ENCODE measurements at regions of chr2 and their contacts with region 1.

Region 1: DNA sequence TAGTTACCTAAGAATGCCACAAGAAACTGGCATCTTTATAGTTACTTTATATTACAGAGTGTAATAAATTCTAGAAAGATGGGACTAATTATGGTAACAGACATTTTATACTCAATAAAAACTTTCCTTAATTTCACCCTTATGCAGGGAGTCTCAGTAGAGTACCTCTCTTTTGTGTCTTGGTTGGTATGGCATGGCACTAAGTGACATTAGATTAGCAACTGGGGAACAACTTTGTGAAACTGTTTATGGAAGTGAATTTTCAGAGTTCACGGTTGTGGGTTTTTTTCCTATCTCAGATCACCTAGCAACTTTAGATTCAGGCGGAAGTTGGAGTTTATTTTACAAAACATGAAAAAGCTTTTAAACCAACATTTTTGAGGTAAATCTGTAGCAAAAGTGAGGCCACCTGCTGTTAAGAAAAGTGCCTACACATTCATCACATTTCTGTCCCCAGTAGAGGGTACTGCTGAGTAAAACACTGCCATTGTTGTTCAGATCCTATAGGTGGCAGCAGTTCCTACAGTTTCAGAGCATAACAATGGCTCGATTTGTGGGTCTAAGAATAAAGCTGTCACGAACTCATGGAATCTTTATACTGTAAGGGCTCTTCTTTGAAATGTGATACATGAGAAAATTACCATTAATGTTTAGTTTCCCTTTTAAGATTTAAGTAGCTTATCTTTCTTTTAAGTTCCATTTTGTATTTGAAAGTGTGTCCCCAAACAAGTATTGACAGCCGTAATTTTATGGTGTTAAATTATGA is 117.6 kb downstream of the CAMKMT start:
- DNase-seq: peak; percentile 74 to 91
- ATAC-seq: peak; percentile 99 to 100
- H3K4me3 ChIP-seq: no peak overlapping the region
- H3K27ac ChIP-seq: no peak overlapping the region
- H3K4me1 ChIP-seq: no peaks in the 10 kb centered on the region
- CTCF ChIP-seq: peak; percentile 100
- EP300 ChIP-seq: no peak
- POLR2A ChIP-seq: no peak
- RAD21 ChIP-seq: peak; percentile 98

Region 2: GRCh38 chr2:44397447-44398175 is 81.7 kb before region 1 on chr2:
- CTCF ChIA-PET with region 1: interaction called, 102 read pairs
- POLR2A ChIA-PET with region 1: no interaction called
- DNase-seq: no peak
- ATAC-seq: no peak
- H3K4me3 ChIP-seq: no peak overlapping the region
- H3K27ac ChIP-seq: no peak overlapping the region
- H3K4me1 ChIP-seq: no peaks in the 10 kb centered on the region
- CTCF ChIP-seq: no peak
- EP300 ChIP-seq: no peak
- POLR2A ChIP-seq: no peak
- RAD21 ChIP-seq: no peak

Region 3: GRCh38 chr2:44456946-44457345 is 22.4 kb before region 1 on chr2:
- CTCF ChIA-PET with region 1: interaction called, 52 read pairs
- POLR2A ChIA-PET with region 1: no interaction called
- DNase-seq: no peak
- ATAC-seq: no peak
- H3K4me3 ChIP-seq: no peak overlapping the region
- H3K27ac ChIP-seq: no peak overlapping the region
- H3K4me1 ChIP-seq: no peaks in the 10 kb centered on the region
- CTCF ChIP-seq: no peak
- EP300 ChIP-seq: no peak
- POLR2A ChIP-seq: no peak
- RAD21 ChIP-seq: no peak

Region 4: DNA sequence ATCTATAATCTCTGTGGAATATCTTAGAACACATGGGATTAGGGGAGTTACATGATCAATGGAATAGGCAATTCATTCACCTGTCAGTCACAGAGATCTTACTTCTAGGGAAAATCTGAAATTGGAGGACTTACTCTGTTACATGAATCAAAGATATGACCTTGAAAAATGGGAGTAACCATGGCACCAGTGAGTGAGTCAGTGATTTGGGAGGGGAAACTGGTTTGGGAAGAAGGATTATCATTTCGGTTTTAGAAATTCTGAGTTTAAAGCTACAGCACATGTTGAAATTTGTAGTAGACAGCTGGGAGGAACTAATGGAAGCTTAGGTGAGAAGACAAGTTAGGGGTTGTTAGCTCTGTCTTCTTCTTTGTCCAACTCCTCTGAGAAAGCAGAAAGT is 36.1 kb after region 1 on chr2:
- CTCF ChIA-PET with region 1: interaction called, 23 read pairs
- POLR2A ChIA-PET with region 1: no interaction called
- DNase-seq: no peak
- ATAC-seq: no peak
- H3K4me3 ChIP-seq: no peak overlapping the region
- H3K27ac ChIP-seq: no peak overlapping the region
- H3K4me1 ChIP-seq: peaks cover 6% of the 10 kb centered on the region; the same call in 1 of the 3 replicates
- CTCF ChIP-seq: no peak
- EP300 ChIP-seq: no peak
- POLR2A ChIP-seq: no peak
- RAD21 ChIP-seq: no peak

Region 5: DNA sequence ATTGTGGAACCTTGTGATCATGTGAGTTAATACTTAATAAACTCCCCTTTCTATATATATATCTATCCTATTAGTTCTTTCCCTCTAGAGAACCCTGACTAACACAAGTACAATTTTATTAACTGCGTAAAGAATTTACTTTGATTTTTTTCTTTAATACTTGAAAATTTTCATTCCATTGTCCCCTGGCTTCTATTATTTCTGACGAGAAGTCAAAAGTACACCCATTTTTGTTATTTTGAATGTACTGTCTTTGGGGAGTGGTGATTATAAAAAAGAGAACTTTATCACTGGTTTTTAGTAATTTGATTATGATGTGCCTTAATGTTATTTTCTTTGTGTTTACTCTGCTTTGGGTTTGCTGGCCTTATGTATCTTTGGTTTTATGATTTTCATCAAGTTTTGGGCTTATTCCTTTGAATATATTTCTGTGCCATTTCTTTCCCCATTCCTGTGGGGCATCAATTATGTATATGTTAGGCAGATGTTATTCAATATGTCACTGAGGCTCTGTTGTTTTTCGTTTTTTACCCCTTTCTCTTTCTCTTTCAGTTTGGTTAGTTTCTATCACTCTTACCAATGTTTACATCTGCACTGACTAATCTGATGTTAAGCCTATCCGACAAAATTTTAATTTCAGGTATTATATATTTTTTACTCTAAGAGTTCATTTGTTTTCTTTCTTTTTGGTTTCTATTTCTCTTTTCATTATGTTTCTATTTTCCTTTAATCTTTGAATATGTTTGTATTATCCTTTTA is 153.8 kb after region 1 on chr2:
- CTCF ChIA-PET with region 1: no interaction called
- POLR2A ChIA-PET with region 1: no interaction called
- DNase-seq: no peak
- ATAC-seq: no peak
- H3K4me3 ChIP-seq: no peak overlapping the region
- H3K27ac ChIP-seq: no peak overlapping the region
- H3K4me1 ChIP-seq: no peaks in the 10 kb centered on the region
- CTCF ChIP-seq: no peak
- EP300 ChIP-seq: no peak
- POLR2A ChIP-seq: no peak
- RAD21 ChIP-seq: no peak

Region 6: GRCh38 chr2:44770221-44771195 is 291.2 kb after region 1 on chr2:
- CTCF ChIA-PET with region 1: interaction called, 10 read pairs
- POLR2A ChIA-PET with region 1: no interaction called
- DNase-seq: no peak
- ATAC-seq: peak; percentile 41 to 53; a peak in 2 of 6 replicates
- H3K4me3 ChIP-seq: no peak overlapping the region
- H3K27ac ChIP-seq: no peak overlapping the region
- H3K4me1 ChIP-seq: no peaks in the 10 kb centered on the region; the same call in 2 of the 3 replicates
- CTCF ChIP-seq: peak; percentile 26; the same call in 1 of the 3 replicates
- EP300 ChIP-seq: no peak
- POLR2A ChIP-seq: no peak
- RAD21 ChIP-seq: 0 out of 5 replicates have a peak, but pooled peaks have one; percentile 17 to 27